Activated B cell treated with CpG ODN at 0.5 μM for 24 hours (primary cell): ENCODE measurements at regions of chr9 and their contacts with region 1.

Region 1: DNA sequence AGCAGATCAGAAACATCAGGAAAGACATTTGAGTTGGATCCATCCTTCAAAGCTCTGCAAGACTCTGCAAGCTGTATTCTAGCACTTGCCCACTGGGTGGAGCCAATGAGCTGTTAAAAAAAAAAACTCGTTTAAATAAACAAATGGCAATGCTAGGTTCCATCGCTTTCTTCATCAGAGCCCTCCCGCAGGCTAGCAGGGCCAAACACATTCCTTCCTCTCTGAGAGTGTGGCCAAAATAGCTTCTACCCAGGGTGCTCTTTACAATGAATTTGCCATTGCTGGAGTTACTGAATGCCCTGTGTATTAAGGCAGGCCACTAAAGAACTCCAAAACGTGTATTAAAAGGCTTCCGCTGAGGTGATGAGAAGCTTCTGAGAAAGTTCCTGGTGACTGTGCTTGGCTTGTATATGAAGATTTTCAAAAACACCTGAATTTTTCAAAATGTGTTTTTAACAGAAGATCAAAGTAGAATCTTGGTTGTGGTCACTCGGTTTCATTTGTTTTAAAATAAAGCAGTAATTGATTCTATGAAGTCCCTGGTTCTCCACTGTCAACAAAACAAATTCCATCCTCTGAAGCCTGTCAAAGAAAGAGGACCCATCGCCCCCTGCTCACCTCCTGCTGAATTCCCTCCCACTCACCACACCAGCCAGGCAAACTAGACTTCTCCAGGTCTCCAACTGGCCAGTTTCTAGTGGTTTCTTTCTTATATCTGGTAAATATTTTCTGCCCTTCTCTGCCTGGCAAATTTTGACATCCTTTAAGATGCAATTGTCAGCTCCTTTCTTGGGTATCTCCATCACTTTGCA is 36.5 kb upstream of the EQTN start:
- DNase-seq: peak; percentile 48
- ATAC-seq: peak; percentile 96
- H3K4me3 Mint-ChIP-seq: no peak overlapping the region
- H3K27ac Mint-ChIP-seq: peak overlapping the region; percentile 36
- H3K4me1 Mint-ChIP-seq: peaks cover 13% of the 10 kb centered on the region
- H3K27me3 Mint-ChIP-seq: no peaks in the 10 kb centered on the region
- CTCF ChIP-seq: peak; percentile 38

Region 2: GRCh38 chr9:26561928-26562327 is 771.5 kb before region 1 on chr9:
- CTCF ChIA-PET with region 1: no interaction called
- POLR2A ChIA-PET with region 1: no interaction called
- intact Hi-C with region 1: no loop called
- DNase-seq: no peak
- ATAC-seq: no peak
- H3K4me3 Mint-ChIP-seq: no peak overlapping the region
- H3K27ac Mint-ChIP-seq: no peak overlapping the region
- H3K4me1 Mint-ChIP-seq: no peaks in the 10 kb centered on the region
- H3K27me3 Mint-ChIP-seq: no peaks in the 10 kb centered on the region
- CTCF ChIP-seq: no peak

Region 3: GRCh38 chr9:27165670-27166069 is 167.8 kb before region 1 on chr9:
- CTCF ChIA-PET with region 1: no interaction called
- POLR2A ChIA-PET with region 1: no interaction called
- intact Hi-C with region 1: no loop called
- DNase-seq: no peak
- ATAC-seq: no peak
- H3K4me3 Mint-ChIP-seq: no peak overlapping the region
- H3K27ac Mint-ChIP-seq: no peak overlapping the region
- H3K4me1 Mint-ChIP-seq: no peaks in the 10 kb centered on the region
- H3K27me3 Mint-ChIP-seq: peaks cover 2% of the 10 kb centered on the region
- CTCF ChIP-seq: no peak

Region 4: DNA sequence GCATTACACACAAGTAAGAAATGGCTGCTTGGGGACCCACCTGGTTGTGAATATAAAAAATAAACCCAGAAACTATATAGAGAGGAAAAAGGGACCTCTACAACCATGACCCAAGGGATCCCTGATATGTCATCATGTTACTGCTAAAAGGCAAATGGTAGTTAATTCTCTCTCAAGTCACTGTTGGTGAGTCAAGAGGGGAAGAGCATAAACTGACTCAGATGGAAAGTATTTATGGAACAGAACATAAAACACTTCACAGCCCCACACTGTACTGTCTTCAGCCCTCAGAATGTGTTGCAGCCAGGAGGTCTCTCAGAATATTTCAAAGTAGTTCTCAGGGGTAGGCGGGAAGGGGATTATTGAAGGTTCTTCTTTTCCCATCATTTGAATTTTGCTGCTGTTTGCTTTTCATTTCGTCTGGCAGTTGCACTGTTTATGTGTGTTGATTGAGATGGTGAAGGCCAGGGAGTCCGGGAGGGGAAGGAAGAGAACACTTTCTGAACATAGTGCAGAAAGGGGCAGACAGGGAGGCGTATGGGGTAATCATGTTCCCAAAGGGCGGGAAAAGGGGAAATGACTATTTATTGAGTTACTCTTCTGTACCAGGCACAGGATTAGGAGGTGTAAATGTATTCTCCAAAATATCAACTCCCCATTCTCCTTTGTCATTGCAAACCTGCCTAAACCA is 138.9 kb before region 1 on chr9:
- CTCF ChIA-PET with region 1: no interaction called
- POLR2A ChIA-PET with region 1: no interaction called
- intact Hi-C with region 1: no loop called
- DNase-seq: no peak
- ATAC-seq: no peak
- H3K4me3 Mint-ChIP-seq: no peak overlapping the region
- H3K27ac Mint-ChIP-seq: no peak overlapping the region
- H3K4me1 Mint-ChIP-seq: no peaks in the 10 kb centered on the region
- H3K27me3 Mint-ChIP-seq: no peaks in the 10 kb centered on the region
- CTCF ChIP-seq: no peak

Region 5: DNA sequence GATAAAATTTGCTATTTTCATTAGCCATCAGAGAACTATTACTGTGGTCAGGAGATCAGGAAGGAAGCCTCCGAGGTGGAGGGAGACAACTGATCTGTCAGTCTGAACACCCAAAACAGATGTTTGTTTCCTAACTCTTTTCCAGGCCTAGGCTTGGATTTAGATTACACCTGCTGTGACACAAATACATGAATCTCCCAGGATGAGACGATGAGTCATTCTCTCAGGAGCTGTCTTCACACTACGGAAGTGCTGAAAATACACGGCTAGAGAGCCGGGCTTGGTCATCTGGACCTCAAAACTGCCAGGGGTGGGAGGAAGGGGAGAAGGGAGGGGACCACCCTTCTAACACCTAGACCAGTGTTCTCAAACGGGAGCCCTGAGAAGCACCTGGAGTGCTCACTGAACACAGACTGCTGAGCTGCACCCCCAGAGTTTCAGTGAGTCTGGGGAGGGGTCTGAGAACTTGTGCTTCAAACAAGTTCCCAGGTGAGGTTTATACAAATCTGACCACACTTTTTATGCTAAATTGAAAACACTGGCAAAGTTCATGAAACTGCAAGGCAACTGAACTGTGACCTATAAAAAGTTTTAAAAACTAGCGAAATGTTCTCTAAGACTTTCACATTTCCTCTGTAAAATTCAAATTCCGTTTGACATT is 43.8 kb after region 1 on chr9:
- CTCF ChIA-PET with region 1: interaction called, 4 read pairs
- POLR2A ChIA-PET with region 1: interaction called, 3 read pairs
- intact Hi-C with region 1: loop called (anchors 2 kb)
- DNase-seq: no peak
- ATAC-seq: peak; percentile 15
- H3K4me3 Mint-ChIP-seq: peak overlapping the region; percentile 68
- H3K27ac Mint-ChIP-seq: peak overlapping the region; percentile 88
- H3K4me1 Mint-ChIP-seq: peaks cover 72% of the 10 kb centered on the region
- H3K27me3 Mint-ChIP-seq: no peaks in the 10 kb centered on the region
- CTCF ChIP-seq: no peak

Region 6: DNA sequence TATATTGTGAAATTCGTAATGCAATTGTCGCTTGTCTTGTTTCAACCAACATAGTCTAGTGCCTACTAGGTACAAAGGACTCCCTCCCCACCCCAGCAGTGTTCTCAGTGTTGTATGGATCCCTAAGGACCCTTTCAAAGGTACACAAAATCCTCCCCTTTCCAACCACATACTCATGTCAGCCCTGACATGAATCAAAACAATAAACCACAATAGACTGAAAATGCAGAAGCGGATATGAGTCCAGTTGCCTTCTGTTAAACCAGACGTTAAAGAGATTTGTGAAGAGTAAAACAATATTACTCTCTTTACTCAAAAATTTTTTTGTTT is 108.3 kb after region 1 on chr9:
- CTCF ChIA-PET with region 1: interaction called, 7 read pairs
- POLR2A ChIA-PET with region 1: no interaction called
- intact Hi-C with region 1: loop called (anchors 5 kb)
- DNase-seq: no peak
- ATAC-seq: peak; percentile 98
- H3K4me3 Mint-ChIP-seq: peak overlapping the region; percentile 32
- H3K27ac Mint-ChIP-seq: peak overlapping the region; percentile 75
- H3K4me1 Mint-ChIP-seq: peaks cover 69% of the 10 kb centered on the region
- H3K27me3 Mint-ChIP-seq: no peaks in the 10 kb centered on the region
- CTCF ChIP-seq: no peak

Region 7: DNA sequence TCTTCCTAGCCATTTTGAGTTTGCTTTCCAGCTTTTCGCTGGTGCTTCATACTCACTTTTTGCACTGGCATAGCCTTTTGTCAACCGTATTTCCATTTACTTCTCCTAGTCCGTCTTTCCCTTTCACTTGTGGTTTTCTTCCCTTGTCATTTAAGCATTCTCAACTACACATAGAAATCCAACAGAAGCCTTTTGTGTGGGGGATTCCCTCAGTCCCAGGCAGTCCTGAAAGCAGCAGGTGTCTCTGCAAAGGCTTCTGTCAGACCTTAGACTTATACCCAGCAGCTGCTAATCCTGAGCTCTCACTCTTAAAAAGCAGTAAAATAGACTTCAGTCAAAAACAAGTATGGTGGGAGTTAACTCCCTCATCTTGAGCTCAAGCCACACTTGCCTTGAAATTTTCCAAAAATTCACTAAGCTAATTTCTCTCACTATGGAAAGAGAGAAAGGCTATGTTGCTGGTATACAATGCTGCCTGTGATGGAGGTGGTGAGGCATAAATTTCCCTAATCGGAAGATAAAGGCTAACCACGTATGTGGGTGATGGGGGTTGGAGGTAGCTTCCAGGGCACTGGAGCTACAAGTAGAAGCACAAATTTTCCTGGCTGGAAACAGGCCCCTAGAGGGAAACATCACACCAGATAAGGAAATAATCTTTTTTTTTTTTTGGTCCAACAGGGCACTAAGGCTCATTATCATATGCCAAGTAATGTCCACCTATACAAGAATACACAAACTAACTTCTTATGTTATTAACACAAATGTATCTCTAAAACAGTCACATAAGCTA is 155.8 kb after region 1 on chr9:
- CTCF ChIA-PET with region 1: interaction called, 6 read pairs
- POLR2A ChIA-PET with region 1: interaction called, 3 read pairs
- intact Hi-C with region 1: loop called (anchors 2 kb)
- DNase-seq: no peak
- ATAC-seq: peak; percentile 40
- H3K4me3 Mint-ChIP-seq: peak overlapping the region; percentile 20
- H3K27ac Mint-ChIP-seq: peak overlapping the region; percentile 46
- H3K4me1 Mint-ChIP-seq: peaks cover 78% of the 10 kb centered on the region
- H3K27me3 Mint-ChIP-seq: no peaks in the 10 kb centered on the region
- CTCF ChIP-seq: no peak

Region 8: GRCh38 chr9:27548055-27548741 is 214.8 kb after region 1 on chr9:
- CTCF ChIA-PET with region 1: interaction called, 94 read pairs
- POLR2A ChIA-PET with region 1: interaction called, 3 read pairs
- intact Hi-C with region 1: loop called (anchors 1 kb)
- DNase-seq: no peak
- ATAC-seq: no peak
- H3K4me3 Mint-ChIP-seq: no peak overlapping the region
- H3K27ac Mint-ChIP-seq: no peak overlapping the region
- H3K4me1 Mint-ChIP-seq: no peaks in the 10 kb centered on the region
- H3K27me3 Mint-ChIP-seq: no peaks in the 10 kb centered on the region
- CTCF ChIP-seq: no peak